B cell (primary cell): ENCODE measurements at regions of chr10 and their contacts with region 1.

Region 1: DNA sequence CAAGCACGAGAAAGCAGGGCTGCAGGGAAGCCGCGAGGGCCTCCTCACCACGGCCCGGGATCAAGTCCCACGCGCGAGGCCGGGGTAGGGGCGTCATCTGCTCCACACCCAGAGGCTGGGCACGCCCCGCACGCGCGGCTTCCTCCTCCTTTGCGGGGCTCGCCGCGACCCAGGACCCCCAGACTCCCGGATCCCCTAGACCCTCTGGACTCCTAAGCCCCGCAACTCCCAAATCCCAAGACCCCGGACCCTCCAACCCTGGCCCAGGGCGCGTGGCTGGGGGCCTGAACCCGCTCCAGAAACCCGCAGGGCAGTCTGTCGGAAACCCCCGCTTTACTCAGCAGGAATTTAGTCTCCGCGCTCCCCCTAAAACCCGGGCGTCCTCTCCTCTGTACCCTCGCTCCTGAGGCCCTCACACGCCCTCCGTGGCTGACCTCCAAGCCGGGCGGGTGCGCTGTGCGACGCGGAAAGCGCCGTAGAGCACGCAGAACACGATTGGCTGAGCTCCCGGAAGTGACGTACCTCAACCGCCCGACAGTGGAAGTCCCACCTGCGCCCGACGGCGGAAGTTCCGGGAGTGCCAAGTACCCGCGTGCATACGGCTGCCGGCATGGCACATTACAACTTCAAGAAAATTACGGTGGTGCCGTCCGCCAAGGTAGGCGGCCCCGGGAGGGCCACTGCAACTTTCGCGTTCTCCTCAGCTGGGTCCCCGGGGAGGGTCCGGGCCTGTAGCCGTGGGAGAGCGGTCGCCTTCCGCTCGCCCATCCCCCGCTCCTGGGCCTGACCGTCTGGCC is at the start of gene GTPBP4:
- DNase-seq: peak; percentile 97
- ATAC-seq: peak; percentile 97
- H3K4me3 ChIP-seq: peak within 1 kb of the TSS; percentile 83 to 99 (median 94)
- H3K4me3 Mint-ChIP-seq: peak within 1 kb of the TSS; percentile 99
- H3K27ac ChIP-seq: peak within 1 kb of the TSS; percentile 81 to 84
- H3K27ac Mint-ChIP-seq: peak within 1 kb of the TSS; percentile 99
- H3K4me1 ChIP-seq: peaks cover 23 to 34% of the 10 kb centered on the region in 2 donors
- H3K4me1 Mint-ChIP-seq: peaks cover 42% of the 10 kb centered on the region
- H3K27me3 ChIP-seq: no peaks in the 10 kb centered on the region
- H3K27me3 Mint-ChIP-seq: no peaks in the 10 kb centered on the region
- CTCF ChIP-seq: peak; percentile 34
- total RNA-seq, gene GTPBP4: 45.4 and 49.5 TPM in 2 replicates

Region 2: GRCh38 chr10:135132-135600 is 852.9 kb before region 1 on chr10 and contains the start of gene ZMYND11:
- CTCF ChIA-PET with region 1: no interaction called
- POLR2A ChIA-PET with region 1: no interaction called
- intact Hi-C with region 1: loop called (anchors 5 kb)
- DNase-seq: peak; percentile 81
- ATAC-seq: peak; percentile 52
- H3K4me3 ChIP-seq: peak within 1 kb of the TSS; percentile 64 to 73 (median 73)
- H3K4me3 Mint-ChIP-seq: peak within 1 kb of the TSS; percentile 92
- H3K27ac ChIP-seq: peak within 1 kb of the TSS; percentile 44 to 83
- H3K27ac Mint-ChIP-seq: peak within 1 kb of the TSS; percentile 97
- H3K4me1 ChIP-seq: peaks cover 16 to 19% of the 10 kb centered on the region in 2 donors
- H3K4me1 Mint-ChIP-seq: peaks cover 35% of the 10 kb centered on the region
- H3K27me3 ChIP-seq: peaks cover 0 to 22% (median 10%) of the 10 kb centered on the region in 4 experiments
- H3K27me3 Mint-ChIP-seq: peaks cover 15% of the 10 kb centered on the region
- CTCF ChIP-seq: no peak
- total RNA-seq, gene ZMYND11: 47.9 and 50.1 TPM in 2 replicates

Region 3: GRCh38 chr10:511101-511848 is 476.8 kb before region 1 on chr10:
- CTCF ChIA-PET with region 1: no interaction called
- POLR2A ChIA-PET with region 1: no interaction called
- intact Hi-C with region 1: loop called (anchors 2 kb)
- DNase-seq: peak; percentile 79
- ATAC-seq: peak; percentile 81
- H3K4me3 ChIP-seq: no peak overlapping the region
- H3K4me3 Mint-ChIP-seq: peak overlapping the region; percentile 48
- H3K27ac ChIP-seq: no peak overlapping the region
- H3K27ac Mint-ChIP-seq: no peak overlapping the region
- H3K4me1 ChIP-seq: peaks cover 11 to 19% of the 10 kb centered on the region in 2 donors
- H3K4me1 Mint-ChIP-seq: peaks cover 14% of the 10 kb centered on the region
- H3K27me3 ChIP-seq: peaks cover 0 to 19% (median 3%) of the 10 kb centered on the region in 4 experiments
- H3K27me3 Mint-ChIP-seq: peaks cover 20% of the 10 kb centered on the region
- CTCF ChIP-seq: peak; percentile 89

Region 4: GRCh38 chr10:931416-932318 is 56.4 kb before region 1 on chr10 and contains the start of gene LARP4B:
- CTCF ChIA-PET with region 1: interaction called, 4 read pairs
- POLR2A ChIA-PET with region 1: interaction called, 14 read pairs
- intact Hi-C with region 1: loop called (anchors 1 kb)
- DNase-seq: peak; percentile 99
- ATAC-seq: peak; percentile 96
- H3K4me3 ChIP-seq: peak within 1 kb of the TSS; percentile 60 to 89 (median 74)
- H3K4me3 Mint-ChIP-seq: peak within 1 kb of the TSS; percentile 97
- H3K27ac ChIP-seq: peak within 1 kb of the TSS; percentile 89
- H3K27ac Mint-ChIP-seq: peak within 1 kb of the TSS; percentile 95
- H3K4me1 ChIP-seq: peaks cover 30 to 33% of the 10 kb centered on the region in 2 donors
- H3K4me1 Mint-ChIP-seq: peaks cover 47% of the 10 kb centered on the region
- H3K27me3 ChIP-seq: peaks cover 0 to 4% (median 2%) of the 10 kb centered on the region in 4 experiments
- H3K27me3 Mint-ChIP-seq: peaks cover 17% of the 10 kb centered on the region
- CTCF ChIP-seq: no peak
- total RNA-seq, gene LARP4B: 124 and 129 TPM in 2 replicates

Region 5: GRCh38 chr10:1048732-1049424 is 60.8 kb after region 1 on chr10 and contains the start of gene IDI1:
- CTCF ChIA-PET with region 1: interaction called, 3 read pairs
- POLR2A ChIA-PET with region 1: interaction called, 11 read pairs
- intact Hi-C with region 1: loop called (anchors 1 kb)
- DNase-seq: peak; percentile 99
- ATAC-seq: peak; percentile 78
- H3K4me3 ChIP-seq: peak within 1 kb of the TSS; percentile 79 to 95 (median 91)
- H3K4me3 Mint-ChIP-seq: peak within 1 kb of the TSS; percentile 92
- H3K27ac ChIP-seq: peak within 1 kb of the TSS; percentile 99 to 100
- H3K27ac Mint-ChIP-seq: peak within 1 kb of the TSS; percentile 97
- H3K4me1 ChIP-seq: peaks cover 41 to 50% of the 10 kb centered on the region in 2 donors
- H3K4me1 Mint-ChIP-seq: peaks cover 64% of the 10 kb centered on the region
- H3K27me3 ChIP-seq: no peaks in the 10 kb centered on the region
- H3K27me3 Mint-ChIP-seq: no peaks in the 10 kb centered on the region
- CTCF ChIP-seq: no peak
- total RNA-seq, gene IDI1: 59.8 and 60.7 TPM in 2 replicates

Region 6: GRCh38 chr10:1056326-1057105 is 68.4 kb after region 1 on chr10 and contains the start of gene WDR37:
- CTCF ChIA-PET with region 1: interaction called, 3 read pairs
- POLR2A ChIA-PET with region 1: no interaction called
- intact Hi-C with region 1: loop called (anchors 1 kb)
- DNase-seq: peak; percentile 92
- ATAC-seq: peak; percentile 91
- H3K4me3 ChIP-seq: peak within 1 kb of the TSS; percentile 84 to 99 (median 89)
- H3K4me3 Mint-ChIP-seq: peak within 1 kb of the TSS; percentile 97
- H3K27ac ChIP-seq: peak within 1 kb of the TSS; percentile 90 to 93
- H3K27ac Mint-ChIP-seq: peak within 1 kb of the TSS; percentile 96
- H3K4me1 ChIP-seq: peaks cover 24 to 36% of the 10 kb centered on the region in 2 donors
- H3K4me1 Mint-ChIP-seq: peaks cover 67% of the 10 kb centered on the region
- H3K27me3 ChIP-seq: no peaks in the 10 kb centered on the region
- H3K27me3 Mint-ChIP-seq: no peaks in the 10 kb centered on the region
- CTCF ChIP-seq: no peak
- total RNA-seq, gene WDR37: 32.3 and 33.2 TPM in 2 replicates